ENCODE measurements at regions of chr11 and their contacts with region 1.

Region 1: DNA sequence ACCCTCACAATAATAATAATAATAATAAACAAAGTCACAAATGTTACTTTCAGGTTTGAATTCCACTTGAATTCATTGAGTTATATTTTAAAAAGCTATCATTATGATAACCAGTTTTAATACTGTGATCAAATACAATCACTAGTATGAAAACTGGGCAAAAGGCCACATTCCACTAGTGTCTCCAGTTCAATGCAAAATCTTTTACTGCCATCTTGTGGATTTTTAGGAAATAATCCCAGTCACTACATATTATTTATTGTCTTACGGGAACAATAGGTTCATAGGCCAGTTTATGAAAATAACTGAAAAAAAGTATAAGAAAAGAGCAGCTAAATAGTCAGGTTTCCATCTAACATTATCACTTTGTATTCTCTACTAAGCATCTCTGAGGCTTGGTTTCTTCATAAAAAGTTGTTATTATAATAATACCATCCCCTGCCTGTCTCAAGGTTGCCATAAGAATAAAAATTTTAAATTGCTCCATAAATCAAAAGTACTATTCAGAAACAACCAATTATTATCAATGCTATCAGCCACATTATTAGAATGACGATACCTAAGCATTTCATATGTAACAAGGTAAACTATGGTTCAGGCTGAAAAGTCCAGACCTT is 533.9 kb upstream of the CCDC90B start:
- DNase-seq: peak; percentile 49
- H3K4me3 ChIP-seq: no peak overlapping the region
- H3K27ac ChIP-seq: no peak overlapping the region
- H3K4me1 ChIP-seq: no peaks in the 10 kb centered on the region
- CTCF ChIP-seq: peak; percentile 82

Region 2: DNA sequence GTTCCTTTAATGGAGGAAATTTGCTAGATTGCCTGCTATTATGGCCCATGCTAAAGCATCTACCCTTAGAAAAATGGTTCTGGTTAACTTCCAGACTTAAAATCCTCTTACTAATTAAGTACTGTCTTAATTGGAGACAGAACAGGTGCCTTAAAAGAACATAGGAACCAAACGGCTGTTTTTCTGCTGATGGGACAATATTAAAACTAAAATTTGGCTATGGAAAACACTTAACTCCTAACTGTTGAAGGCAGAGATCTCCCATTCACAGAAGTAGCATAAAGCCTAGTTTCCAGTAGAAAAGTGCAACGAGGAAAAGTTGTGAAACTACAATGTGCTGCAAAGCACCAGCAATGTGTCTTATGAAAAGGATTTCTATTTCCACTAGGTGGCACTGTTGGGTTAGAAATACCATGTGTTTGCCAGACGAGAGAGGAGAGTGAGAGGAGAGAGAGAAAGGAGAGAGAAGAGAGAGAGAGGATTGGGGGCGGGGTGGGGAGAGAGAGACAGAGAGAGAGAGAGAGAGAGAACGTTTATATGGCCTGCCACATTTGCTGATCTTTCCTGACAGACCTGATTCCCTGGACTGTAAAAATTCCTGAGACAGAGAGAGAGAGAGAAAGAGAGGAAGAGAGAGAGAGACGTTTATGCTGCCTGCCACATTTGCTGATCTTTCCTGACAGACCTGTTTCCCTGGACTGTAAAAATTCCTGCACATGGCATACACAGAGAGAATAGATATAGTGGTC is 1137.9 kb before region 1 on chr11:
- CTCF ChIA-PET with region 1: no interaction called
- POLR2A ChIA-PET with region 1: no interaction called
- intact Hi-C with region 1: loop called (anchors 10 kb)
- DNase-seq: peak; percentile 72
- H3K4me3 ChIP-seq: no peak overlapping the region
- H3K27ac ChIP-seq: no peak overlapping the region
- H3K4me1 ChIP-seq: no peaks in the 10 kb centered on the region
- CTCF ChIP-seq: peak; percentile 86

Region 3: DNA sequence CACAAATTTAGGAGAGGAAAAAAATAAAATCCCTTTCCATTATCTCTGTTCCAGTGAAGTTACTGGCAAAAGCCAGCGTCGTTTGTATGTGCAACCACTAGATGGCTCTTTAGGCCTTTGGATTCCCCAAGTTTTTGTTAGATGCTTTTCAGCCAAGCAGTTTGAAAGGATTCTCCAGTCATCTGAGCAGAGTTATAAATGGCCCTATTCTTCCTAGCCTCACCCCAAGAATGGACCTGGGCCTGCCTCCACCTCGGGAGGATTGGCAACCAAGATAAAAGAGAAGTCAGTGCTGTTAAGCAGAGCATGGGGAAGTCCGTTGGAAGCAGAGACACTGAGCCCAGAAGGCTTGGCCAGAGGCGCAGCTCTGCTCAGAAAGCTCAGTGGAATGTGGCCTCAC is 1101.7 kb before region 1 on chr11:
- CTCF ChIA-PET with region 1: no interaction called
- POLR2A ChIA-PET with region 1: no interaction called
- intact Hi-C with region 1: loop called (anchors 2 kb)
- DNase-seq: peak; percentile 41
- H3K4me3 ChIP-seq: no peak overlapping the region
- H3K27ac ChIP-seq: no peak overlapping the region
- H3K4me1 ChIP-seq: no peaks in the 10 kb centered on the region
- CTCF ChIP-seq: peak; percentile 89

Region 4: DNA sequence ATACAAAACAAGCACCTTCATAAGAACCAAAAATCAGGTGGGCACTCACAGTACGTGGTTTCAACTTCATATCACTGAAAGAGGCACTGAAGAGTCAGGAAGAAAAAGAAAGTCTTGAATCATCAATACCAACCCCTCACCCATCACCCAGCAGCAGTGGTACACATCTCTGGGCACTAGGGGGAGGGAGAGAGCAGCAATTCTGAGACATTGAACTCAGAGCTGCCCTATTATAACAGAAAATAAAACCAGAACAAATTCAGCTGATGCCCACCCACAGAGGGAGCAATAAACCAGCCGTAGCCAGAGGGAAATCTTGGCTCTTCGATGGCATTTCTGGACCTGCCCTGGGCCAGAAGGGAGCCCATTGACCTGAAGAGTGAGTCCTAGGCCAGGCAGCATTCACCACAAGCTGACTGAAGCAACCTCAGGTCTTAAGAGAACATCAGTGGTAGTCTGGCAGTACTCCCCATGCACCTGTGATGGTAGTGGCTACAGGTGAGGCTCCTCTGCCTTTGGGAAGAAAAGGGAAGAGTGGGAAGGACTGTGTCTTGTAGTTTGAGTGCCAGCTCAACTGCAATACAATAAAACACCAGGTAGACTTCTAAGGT is 1044.2 kb before region 1 on chr11:
- CTCF ChIA-PET with region 1: no interaction called
- POLR2A ChIA-PET with region 1: no interaction called
- intact Hi-C with region 1: loop called (anchors 10 kb)
- DNase-seq: peak; percentile 51
- H3K4me3 ChIP-seq: no peak overlapping the region
- H3K27ac ChIP-seq: no peak overlapping the region
- H3K4me1 ChIP-seq: no peaks in the 10 kb centered on the region
- CTCF ChIP-seq: peak; percentile 86

Region 5: DNA sequence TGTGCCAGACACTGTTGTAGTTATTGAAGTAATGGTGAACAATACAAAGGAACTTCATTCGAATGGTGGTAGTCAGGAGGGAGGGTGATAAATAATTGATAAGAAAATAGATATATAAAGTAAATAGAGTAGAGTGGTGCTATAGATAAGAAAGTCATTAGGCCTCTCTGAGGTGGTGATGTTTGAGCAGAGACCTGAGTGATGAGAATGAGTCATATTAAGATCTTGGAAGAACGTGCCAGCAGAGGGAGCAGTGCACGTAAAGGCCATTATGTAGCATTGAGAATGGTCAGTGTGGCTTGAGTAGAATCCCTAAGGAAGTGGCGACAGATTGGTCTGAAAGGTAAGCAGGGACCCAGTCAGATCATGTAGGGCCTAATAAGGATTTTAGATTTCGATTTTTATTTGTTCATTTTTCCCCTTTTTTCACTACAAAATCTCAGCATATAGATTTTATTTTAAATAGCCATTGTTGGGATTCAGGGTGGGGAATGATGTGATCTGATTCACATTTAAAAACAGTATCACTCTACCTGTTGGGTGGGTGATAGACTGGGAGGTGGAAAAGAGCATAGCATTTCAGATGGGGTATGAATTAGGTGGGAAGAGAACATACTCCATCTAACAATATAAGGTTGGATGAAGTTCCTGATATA is 578.6 kb before region 1 on chr11:
- CTCF ChIA-PET with region 1: no interaction called
- POLR2A ChIA-PET with region 1: no interaction called
- intact Hi-C with region 1: loop called (anchors 10 kb)
- DNase-seq: peak; percentile 62
- H3K4me3 ChIP-seq: no peak overlapping the region
- H3K27ac ChIP-seq: no peak overlapping the region
- H3K4me1 ChIP-seq: no peaks in the 10 kb centered on the region
- CTCF ChIP-seq: peak; percentile 81

Region 6: DNA sequence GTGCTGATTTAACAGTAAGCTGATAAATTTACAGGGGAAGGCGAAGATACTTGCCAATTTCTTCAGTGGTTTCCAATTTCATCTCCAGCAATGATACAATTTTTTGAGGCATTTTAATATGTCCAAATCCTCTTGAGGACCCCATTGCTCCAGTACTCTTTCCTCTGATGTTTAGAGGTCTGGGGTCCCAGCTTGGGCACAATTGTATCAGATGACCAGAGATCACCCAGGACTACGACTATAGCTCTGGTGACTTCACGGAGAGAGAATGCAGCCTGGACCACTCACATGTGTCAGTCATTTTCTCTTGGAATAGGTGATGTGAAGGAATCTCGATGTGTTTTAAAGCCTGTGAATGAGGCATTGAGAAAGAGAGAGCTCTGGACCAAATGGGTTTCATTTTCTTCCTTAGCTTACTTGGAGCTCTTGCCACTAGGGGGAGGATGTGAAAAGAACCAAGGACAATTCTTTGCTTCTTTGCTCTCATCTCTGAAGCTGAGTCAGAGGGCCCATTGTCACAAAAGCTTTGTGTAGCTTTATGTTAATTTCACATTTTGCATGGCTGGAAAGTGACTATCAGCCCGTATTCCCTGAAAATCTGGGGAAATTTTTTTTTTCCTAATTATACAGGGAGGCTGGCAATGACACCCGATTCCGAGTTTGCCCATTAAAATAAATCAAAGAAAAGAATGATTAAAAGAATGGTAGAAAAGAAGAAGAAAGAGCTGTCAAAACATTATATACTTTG is 527.2 kb before region 1 on chr11:
- CTCF ChIA-PET with region 1: no interaction called
- POLR2A ChIA-PET with region 1: no interaction called
- intact Hi-C with region 1: loop called (anchors 5 kb)
- DNase-seq: peak; percentile 75
- H3K4me3 ChIP-seq: peak overlapping the region; percentile 50
- H3K27ac ChIP-seq: no peak overlapping the region
- H3K4me1 ChIP-seq: peaks cover 33% of the 10 kb centered on the region
- CTCF ChIP-seq: peak; percentile 87

Measured in OCI-LY7 (cell line).